ENCODE measurements at regions of chr10 and their contacts with region 1.

Region 1: DNA sequence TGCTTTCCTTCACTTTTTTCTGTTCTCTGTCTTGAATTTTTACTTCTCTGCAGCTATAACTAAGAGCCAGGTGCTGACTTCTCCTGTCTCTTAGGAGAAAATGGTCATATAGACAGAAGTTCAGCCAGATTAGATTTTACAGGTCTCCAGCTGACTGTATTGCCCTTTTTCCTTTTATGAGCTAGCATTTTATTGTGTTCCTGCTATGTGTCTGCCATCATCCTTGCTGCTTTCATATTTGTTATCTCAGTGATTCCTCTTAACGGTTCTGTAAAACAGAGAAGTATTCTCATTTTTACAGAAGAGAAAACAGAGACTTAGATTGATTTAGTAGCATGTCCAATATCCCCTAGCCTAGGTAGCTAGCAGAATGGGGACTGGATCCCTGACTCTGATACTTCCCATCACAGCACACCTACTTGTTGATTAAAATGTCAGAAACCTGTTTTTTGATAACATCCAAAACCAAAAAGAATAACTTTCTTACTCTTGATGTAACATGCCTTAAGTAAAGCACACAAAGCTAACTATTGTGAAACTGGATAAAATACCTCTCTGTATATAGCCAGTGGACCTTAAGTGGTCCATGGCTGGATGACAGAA is 5.2 kb downstream of the KAT6B start:
- DNase-seq: no peak
- CTCF ChIP-seq: no peak

Region 2: GRCh38 chr10:74530981-74531380 is 300.6 kb before region 1 on chr10:
- CTCF ChIA-PET with region 1: no interaction called
- POLR2A ChIA-PET with region 1: no interaction called
- DNase-seq: no peak
- CTCF ChIP-seq: no peak

Region 3: DNA sequence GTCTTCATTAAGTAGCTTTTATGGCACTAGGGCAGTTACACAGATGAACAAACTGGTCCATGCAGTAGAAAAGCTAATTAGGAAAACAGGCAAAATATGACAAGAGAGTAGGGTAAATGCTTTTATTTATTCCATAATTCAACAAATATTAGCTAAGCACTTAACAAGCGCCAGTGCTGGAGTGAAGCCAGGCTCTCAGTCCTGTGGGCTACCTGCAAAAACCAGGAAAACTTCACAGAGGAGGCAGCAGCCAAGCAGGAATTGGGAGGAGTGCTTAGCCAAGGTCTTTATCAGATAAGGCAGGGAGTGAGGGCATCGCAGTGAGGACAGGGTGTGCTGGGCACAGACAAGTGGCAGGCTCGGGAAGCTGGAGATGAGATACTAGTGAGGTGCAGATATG is 10.1 kb before region 1 on chr10:
- CTCF ChIA-PET with region 1: no interaction called
- POLR2A ChIA-PET with region 1: no interaction called
- DNase-seq: no peak
- CTCF ChIP-seq: no peak

Region 4: DNA sequence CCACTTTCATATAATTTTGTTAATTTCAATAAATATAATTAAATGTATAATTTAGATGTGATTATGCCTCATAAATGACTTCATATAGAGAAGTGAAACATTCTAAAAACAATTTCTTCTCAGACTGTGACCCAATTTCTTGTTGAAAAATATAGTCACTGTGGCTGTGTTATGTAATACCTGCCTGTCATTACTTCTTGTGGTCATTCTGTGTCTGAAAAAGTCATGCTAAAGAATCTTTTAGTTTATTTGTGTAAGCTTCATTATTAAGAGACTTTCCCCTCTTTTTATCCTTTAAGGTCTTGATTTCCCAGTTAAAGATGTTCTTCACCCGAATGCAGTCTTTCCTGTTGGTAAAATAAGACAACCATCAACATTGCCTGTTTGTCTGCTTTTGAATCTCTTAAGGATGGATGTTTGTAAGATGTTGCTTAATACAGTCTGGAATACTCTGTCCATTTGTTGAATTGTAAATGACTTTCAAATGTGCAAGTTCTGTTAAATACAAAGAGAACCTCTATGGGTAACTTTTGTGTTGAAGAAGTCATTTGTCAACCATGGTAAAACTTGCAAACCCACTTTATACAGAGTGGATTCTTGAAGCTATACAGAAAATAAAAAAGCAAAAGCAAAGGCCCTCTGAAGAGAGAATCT is 10.8 kb after region 1 on chr10:
- CTCF ChIA-PET with region 1: interaction called, 16 read pairs
- POLR2A ChIA-PET with region 1: no interaction called
- DNase-seq: no peak
- CTCF ChIP-seq: no peak

Region 5: GRCh38 chr10:75111367-75111906 is 279.8 kb after region 1 on chr10 and contains the start of gene SAMD8:
- CTCF ChIA-PET with region 1: no interaction called
- POLR2A ChIA-PET with region 1: no interaction called
- DNase-seq: peak; percentile 100
- CTCF ChIP-seq: peak; percentile 0